ENCODE measurements at regions of chr5 and their contacts with region 1.

Region 1: GRCh38 chr5:178153573-178154343 is at the start of gene NHP2:
- DNase-seq: peak; percentile 97 to 98
- ATAC-seq: peak; percentile 99 to 100
- H3K4me3 ChIP-seq: peak within 1 kb of the TSS; percentile 69 to 93 (median 77)
- H3K27ac ChIP-seq: peak within 1 kb of the TSS; percentile 82 to 88 (median 86)
- H3K4me1 ChIP-seq: peaks cover 16 to 17% of the 10 kb centered on the region in 2 donors
- H3K27me3 ChIP-seq: no peaks in the 10 kb centered on the region
- CTCF ChIP-seq: no peak
- POLR2A ChIP-seq: peak; percentile 51 to 65
- total RNA-seq, gene NHP2: 157 to 261 (median 241) TPM

Region 2: DNA sequence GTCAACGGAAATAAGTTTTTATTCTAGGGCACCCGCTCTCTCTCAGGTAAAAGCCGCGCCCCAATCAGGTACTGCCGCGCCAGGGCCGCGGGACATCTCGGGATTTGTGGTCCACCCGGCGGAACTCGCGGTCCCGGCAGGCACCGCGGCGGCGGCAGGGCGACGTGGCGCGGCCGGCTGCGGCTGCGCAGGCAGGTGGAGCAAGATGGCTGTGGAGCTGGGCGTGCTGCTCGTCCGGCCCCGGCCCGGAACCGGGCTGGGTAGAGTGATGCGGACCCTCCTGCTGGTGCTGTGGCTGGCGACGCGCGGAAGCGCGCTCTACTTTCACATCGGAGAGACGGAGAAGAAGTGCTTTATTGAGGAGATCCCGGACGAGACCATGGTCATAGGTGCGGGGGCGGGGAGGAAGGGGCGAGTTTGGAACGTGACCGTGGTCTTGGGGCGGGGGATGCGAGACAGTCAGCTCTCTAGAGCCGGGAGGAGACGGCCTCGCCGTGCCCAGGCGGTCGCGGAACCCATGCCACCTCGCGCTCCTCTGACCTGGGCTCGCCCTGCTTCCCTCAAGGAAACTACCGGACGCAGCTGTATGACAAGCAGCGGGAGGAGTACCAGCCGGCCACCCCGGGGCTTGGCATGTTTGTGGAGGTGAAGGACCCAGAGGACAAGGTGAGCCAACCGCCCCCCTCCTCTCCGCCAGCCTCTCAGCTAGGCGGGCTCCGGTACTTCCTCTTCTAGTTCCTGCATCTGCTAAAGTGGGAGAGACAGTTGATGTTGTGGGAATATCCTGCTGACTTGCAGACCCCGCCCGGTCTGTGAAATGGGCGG is 561.5 kb before region 1 on chr5 and contains the start of gene TMED9:
- in situ Hi-C with region 1: no loop called
- intact Hi-C with region 1: loop called (anchors 10 kb)
- DNase-seq: peak; percentile 71 to 80
- ATAC-seq: peak; percentile 88 to 97
- H3K4me3 ChIP-seq: peak within 1 kb of the TSS; percentile 86 to 98 (median 94)
- H3K27ac ChIP-seq: peak within 1 kb of the TSS; percentile 79 to 90 (median 86)
- H3K4me1 ChIP-seq: peaks cover 11 to 15% of the 10 kb centered on the region in 2 donors
- H3K27me3 ChIP-seq: peaks cover 0 to 4% (median 0%) of the 10 kb centered on the region in 3 donors
- CTCF ChIP-seq: peak in 2 of 5 experiments; percentile 21 to 36
- POLR2A ChIP-seq: peak; percentile 80 to 93
- total RNA-seq, gene TMED9: 24.3 to 67.2 (median 37.3) TPM

Region 3: DNA sequence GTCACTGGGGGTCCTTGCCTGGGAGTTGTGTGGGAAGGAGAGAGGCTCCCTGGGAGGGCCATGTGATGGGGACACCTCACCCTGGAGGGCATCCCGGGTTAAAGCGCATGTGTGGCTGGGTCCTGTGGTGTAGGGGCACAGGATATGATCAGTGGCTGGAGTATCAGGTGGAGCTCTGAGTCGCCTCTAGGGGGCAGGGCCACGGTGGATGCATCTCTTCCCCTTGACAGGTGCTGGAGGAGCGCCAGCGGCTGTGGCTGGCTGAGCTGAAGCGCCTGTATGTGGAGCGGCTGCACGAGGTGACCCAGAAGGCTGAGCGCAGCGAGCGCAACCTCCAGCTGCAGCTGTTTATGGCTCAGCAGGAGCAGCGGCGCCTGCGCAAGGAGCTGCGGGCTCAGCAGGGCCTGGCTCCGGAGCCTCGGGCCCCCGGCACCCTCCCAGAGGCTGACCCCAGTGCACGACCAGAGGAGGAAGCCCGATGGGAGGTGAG is 32.8 kb before region 1 on chr5:
- in situ Hi-C with region 1: no loop called
- intact Hi-C with region 1: loop called (anchors 1 kb)
- DNase-seq: peak; percentile 89 to 95
- ATAC-seq: peak; percentile 81 to 89
- H3K4me3 ChIP-seq: peak overlapping the region; percentile 45 to 70 (median 54)
- H3K27ac ChIP-seq: peak overlapping the region; percentile 73 to 85 (median 78)
- H3K4me1 ChIP-seq: peaks cover 37 to 38% of the 10 kb centered on the region in 2 donors
- H3K27me3 ChIP-seq: peaks cover 5 to 12% (median 10%) of the 10 kb centered on the region in 3 donors
- CTCF ChIP-seq: peak; percentile 53 to 82 (median 69)
- POLR2A ChIP-seq: peak in 1 of 2 donors; percentile 14

Region 4: GRCh38 chr5:178130604-178131485 is 22.9 kb before region 1 on chr5 and contains the start of gene RMND5B:
- in situ Hi-C with region 1: no loop called
- intact Hi-C with region 1: loop called (anchors 1 kb)
- DNase-seq: peak; percentile 75 to 80
- ATAC-seq: peak; percentile 94 to 95
- H3K4me3 ChIP-seq: peak within 1 kb of the TSS; percentile 73 to 100 (median 89)
- H3K27ac ChIP-seq: peak within 1 kb of the TSS; percentile 88 to 99 (median 94)
- H3K4me1 ChIP-seq: peaks cover 5 to 11% of the 10 kb centered on the region in 2 donors
- H3K27me3 ChIP-seq: no peaks in the 10 kb centered on the region
- CTCF ChIP-seq: peak in 1 of 5 experiments; percentile 20
- POLR2A ChIP-seq: peak; percentile 84 to 93
- total RNA-seq, gene RMND5B: 24.0 to 55.9 (median 44.2) TPM

Region 5: GRCh38 chr5:178204182-178204894 is 50.6 kb after region 1 on chr5 and contains the start of gene HNRNPAB:
- in situ Hi-C with region 1: no loop called
- intact Hi-C with region 1: loop called (anchors 1 kb)
- DNase-seq: peak; percentile 94 to 97
- ATAC-seq: peak; percentile 89 to 92
- H3K4me3 ChIP-seq: peak within 1 kb of the TSS; percentile 62 to 79 (median 70)
- H3K27ac ChIP-seq: peak within 1 kb of the TSS; percentile 82 to 92 (median 88)
- H3K4me1 ChIP-seq: peaks cover 26 to 32% of the 10 kb centered on the region in 2 donors
- H3K27me3 ChIP-seq: no peaks in the 10 kb centered on the region
- CTCF ChIP-seq: no peak
- POLR2A ChIP-seq: peak; percentile 100
- total RNA-seq, gene HNRNPAB: 84.2 to 117 (median 106) TPM